Cardiac septum (tissue), 1 donor: ENCODE measurements at regions of chr12 and their contacts with region 1.

Region 1: DNA sequence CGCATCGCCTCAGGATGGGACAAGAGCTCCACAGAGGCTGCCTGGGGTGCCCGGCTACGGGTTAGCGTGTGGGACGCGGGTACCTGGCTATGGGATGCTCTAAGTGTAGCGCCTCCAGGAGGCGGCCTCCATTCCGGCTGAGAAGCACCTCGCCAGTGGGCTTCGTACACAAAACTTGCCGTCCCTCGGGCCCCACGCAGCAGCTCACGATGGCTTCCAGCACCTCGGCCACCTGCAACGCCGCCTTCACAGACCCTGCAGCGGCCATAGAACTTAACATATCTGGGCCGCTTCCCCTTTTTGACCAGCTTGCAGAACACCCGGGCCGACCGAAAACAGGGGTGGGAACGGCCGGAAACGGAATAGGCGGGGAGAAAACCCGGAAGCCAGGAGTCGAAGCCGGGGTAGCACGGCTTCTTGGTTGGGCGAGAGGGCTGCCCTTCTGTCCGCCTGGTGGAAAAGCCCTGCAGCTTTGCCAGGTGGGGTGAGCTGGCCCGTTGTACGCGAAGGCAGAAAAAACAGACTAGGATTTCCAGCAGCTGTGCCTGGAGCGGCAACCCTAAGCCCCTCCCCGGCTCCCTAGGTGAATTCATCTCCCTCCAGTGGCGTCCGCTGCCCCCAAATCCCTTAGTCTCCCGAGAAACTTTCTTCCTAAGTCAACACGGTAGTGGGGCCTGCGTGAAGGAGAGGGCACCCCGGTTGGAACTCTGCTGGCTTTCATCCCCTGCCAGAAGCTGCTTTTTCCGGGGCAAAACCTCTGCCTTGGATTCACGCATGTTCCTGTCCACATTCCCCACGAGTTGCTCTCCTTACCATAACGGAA is at the start of gene BBS10:
- DNase-seq: peak; percentile 98
- total RNA-seq, gene BBS10: 9.6 TPM

Region 2: GRCh38 chr12:75511116-75512048 is 836.9 kb before region 1 on chr12 and contains the start of gene KRR1:
- intact Hi-C with region 1: loop called (anchors 10 kb)
- DNase-seq: peak; percentile 95
- total RNA-seq, gene KRR1: 38.1 TPM

Region 3: GRCh38 chr12:76083904-76084862 is 264.1 kb before region 1 on chr12 and contains the start of gene NAP1L1:
- intact Hi-C with region 1: loop called (anchors 2 kb)
- DNase-seq: peak; percentile 98
- total RNA-seq, gene NAP1L1: 348 TPM

Region 4: GRCh38 chr12:76158518-76159321 is 189.6 kb before region 1 on chr12:
- intact Hi-C with region 1: loop called (anchors 5 kb)
- DNase-seq: no peak

Region 5: DNA sequence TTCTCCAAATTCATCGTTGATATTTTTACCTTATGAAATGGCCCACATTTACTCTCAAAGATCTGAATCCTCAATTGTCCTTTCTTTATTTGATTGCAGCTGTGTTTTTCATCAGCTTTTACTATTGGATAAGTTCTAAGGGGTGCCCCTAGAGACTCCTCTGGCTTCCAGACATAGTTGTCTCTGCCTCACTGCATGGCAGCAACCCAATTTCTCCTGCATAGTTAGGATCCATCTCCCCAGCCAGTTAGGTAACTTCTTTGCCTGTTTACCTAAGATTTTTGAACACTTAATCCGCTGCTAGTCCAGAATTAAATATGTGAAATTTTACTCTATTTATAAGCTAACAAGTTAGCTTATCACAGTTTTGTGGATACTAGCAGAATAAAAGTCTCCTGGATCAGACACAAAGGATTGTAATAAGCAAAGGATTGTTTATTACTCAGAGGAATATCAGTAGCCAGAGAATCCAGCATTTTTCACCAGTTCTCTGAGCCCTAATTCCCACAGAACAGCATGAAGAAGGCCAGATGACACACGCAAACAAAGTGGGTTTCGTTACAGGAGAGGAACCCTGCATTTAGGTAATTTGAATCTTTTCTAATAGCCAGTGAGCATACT is 101.2 kb before region 1 on chr12:
- intact Hi-C with region 1: no loop called
- DNase-seq: no peak

Region 6: DNA sequence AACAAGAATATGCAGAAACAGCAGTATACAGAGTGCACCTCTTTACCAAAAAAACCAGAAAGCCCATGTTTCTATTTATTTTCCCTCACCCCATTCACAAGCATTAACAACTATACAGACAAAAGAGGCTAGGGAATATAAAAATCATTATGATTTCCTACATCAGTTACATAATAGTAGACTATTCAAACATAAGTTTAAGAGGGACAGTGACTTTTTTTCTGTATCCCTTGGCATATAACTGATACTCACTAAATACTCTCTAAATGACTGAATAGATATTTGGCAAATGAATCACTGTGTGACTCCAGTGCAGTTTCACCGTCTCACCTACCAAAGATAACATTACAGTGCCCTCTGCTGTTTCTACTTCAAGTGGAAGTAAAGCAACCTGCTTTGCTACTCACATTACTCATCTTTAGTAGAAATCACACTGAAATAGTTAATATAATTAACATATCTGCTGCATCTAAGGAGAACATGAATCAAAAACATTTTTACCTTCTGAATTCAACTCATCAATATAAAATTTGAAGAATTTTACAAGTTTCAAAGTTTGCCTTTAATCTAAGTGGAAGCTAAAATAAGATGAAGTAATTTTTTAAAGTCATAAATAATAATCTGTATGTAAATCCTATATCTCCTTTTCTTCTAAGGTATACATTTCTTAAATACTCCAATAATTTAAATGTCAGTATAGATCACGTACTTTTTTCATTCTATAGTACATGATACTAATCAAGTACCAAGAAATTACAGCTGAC is 107.5 kb after region 1 on chr12:
- intact Hi-C with region 1: loop called (anchors 5 kb)
- DNase-seq: no peak

Region 7: DNA sequence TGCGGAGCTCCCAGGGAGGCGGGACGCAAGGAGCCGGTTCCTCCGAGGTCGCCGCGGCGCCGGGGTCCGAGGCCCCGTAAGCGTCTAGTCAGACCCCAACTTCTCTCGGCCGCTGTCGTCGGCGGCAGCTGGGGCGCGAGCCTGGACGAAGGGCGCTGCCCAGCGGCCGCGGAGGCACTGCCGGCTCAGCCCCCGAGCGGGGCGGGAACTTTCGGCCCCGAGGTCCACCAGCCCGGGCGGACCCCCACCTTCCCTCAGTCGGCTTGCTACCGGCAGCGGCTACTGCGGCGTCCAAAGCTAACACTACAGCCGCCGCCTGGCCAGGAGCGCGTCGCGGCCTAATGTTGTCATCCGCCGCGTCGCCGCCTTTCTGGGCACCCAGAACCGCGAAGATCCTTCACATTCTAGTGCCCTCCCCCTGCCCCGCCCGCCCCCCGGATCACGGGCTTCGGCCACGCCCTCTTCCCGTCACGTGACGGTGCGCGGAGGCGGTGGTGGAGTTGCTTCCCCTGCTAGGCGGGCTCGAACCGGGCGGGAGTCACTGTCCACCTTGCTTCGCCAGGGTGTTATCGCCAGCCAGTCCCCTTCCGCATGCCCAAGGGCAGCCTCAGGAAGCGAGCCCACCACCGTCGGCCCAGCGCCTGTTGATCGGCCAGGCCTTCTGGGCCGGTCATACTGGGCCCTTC is 211.3 kb after region 1 on chr12 and contains the start of gene OSBPL8:
- intact Hi-C with region 1: loop called (anchors 5 kb)
- DNase-seq: peak; percentile 99
- total RNA-seq, gene OSBPL8: 43.2 TPM